ENCODE measurements at regions of chr7 and their contacts with region 1.

Region 1: DNA sequence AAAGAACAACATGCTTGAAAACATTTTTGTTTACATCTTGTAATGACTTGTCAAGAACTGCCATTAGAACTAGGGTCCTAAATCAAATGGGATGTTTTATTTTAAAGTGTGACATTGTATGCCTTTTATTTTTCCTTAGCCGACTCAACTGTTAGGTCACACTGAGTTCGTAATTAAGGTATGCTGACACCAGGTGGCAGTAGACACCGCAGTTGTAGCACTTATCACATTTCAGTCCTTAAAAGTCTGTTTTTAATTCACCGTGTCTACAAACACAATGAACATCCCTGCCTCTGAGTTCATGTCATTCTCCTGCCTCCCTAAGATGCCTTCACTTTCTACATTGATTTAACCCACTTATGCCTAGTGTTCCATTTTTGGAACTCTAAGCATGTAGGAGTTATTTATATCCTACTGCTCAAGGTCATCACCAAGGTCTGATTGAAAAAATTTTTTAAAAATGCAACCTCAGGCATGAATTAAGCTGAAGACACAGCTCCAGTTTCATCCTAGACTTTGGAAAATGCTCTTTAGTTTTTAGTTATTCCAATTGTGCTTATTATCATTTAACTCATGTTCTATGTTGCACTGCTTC is 186.1 kb downstream of the BMPER start:
- DNase-seq: peak in 1 of 2 experiments; percentile 14
- H3K4me3 ChIP-seq: no peak overlapping the region
- H3K4me3 Mint-ChIP-seq: no peak overlapping the region
- H3K27ac Mint-ChIP-seq: no peak overlapping the region
- H3K4me1 ChIP-seq: no peaks in the 10 kb centered on the region
- H3K4me1 Mint-ChIP-seq: no peaks in the 10 kb centered on the region
- H3K27me3 ChIP-seq: no peaks in the 10 kb centered on the region
- H3K27me3 Mint-ChIP-seq: peaks cover 2% of the 10 kb centered on the region
- CTCF ChIP-seq: peak in 1 of 2 experiments; percentile 53

Region 2: DNA sequence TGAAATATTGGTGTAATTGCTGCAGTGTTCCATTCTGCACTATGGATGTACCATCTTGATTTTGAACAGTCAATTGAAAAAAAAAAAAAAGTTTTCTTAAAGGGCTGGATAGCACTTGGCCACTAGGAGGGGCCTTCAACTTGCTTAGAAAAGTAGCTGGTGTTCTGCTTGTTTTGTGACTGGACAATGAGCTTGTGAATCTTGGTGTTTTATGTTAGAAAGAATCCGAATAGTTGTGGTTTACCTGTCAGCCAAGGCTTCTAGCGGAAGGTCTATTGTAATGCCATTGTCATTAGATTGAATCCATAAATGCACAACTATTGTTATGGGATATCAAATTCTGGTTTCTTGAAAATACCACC is 109.0 kb before region 1 on chr7:
- CTCF ChIA-PET with region 1: interaction called, 16 read pairs
- POLR2A ChIA-PET with region 1: no interaction called
- intact Hi-C with region 1: no loop called
- DNase-seq: no peak
- H3K4me3 ChIP-seq: no peak overlapping the region
- H3K4me3 Mint-ChIP-seq: no peak overlapping the region
- H3K27ac Mint-ChIP-seq: no peak overlapping the region
- H3K4me1 ChIP-seq: peaks cover 18% of the 10 kb centered on the region; the same call in 1 of the 2 replicates
- H3K4me1 Mint-ChIP-seq: peaks cover 12% of the 10 kb centered on the region
- H3K27me3 ChIP-seq: no peaks in the 10 kb centered on the region
- H3K27me3 Mint-ChIP-seq: no peaks in the 10 kb centered on the region
- CTCF ChIP-seq: peak in 1 of 2 experiments; percentile 22

Region 3: DNA sequence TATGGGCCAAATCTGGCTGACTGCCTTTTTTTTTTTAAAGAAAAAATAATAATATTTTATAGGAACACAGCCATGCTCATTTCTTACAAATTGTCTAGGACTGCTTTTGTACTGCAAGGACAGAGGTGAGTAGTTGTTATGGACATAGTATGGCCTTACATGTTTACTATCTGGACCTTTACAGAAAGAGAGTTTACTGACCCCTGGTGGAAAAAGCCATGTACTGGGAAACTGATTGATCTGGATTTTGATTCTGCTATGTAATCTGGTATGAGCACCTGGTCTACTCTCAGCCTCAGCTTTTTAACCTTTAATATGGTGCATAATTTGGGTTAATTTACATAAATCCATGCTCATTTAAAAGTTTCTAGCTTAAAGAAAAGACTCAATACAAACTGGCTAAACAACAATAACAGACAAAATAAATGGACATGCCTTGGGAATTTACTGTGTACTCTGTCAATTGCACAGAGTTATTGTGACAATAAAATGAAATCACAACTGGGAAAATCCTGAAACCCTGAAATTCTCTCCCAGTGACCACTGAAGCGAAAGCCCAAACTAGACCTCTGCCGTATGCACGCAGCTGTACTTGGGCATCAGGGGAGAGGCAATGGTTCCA is 74.6 kb after region 1 on chr7:
- CTCF ChIA-PET with region 1: no interaction called
- POLR2A ChIA-PET with region 1: no interaction called
- intact Hi-C with region 1: loop called (anchors 1 kb)
- DNase-seq: peak in 1 of 2 experiments; percentile 31
- H3K4me3 ChIP-seq: no peak overlapping the region
- H3K4me3 Mint-ChIP-seq: no peak overlapping the region
- H3K27ac Mint-ChIP-seq: no peak overlapping the region
- H3K4me1 ChIP-seq: no peaks in the 10 kb centered on the region
- H3K4me1 Mint-ChIP-seq: no peaks in the 10 kb centered on the region
- H3K27me3 ChIP-seq: no peaks in the 10 kb centered on the region; the same call in 1 of the 2 replicates
- H3K27me3 Mint-ChIP-seq: no peaks in the 10 kb centered on the region
- CTCF ChIP-seq: peak; percentile 25 to 34

Region 4: DNA sequence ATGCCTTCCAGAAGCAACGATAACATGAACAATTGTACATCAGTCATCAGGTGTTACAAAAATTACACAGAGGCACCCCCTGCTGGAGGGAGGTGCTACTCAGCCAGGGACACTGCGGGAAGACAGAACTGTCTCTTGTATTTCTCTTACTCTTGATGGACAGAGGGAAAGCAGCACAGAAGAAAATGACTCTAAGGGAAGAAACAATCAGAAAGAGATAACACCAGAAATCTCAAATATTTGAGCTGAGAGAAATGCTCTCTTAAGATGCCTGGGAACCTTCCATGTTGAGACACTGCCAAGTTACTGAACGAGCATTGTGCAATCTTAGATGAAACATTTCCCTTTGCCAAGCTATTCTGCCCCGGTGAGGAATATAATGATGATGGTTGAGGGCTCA is 339.0 kb after region 1 on chr7:
- CTCF ChIA-PET with region 1: no interaction called
- POLR2A ChIA-PET with region 1: no interaction called
- intact Hi-C with region 1: loop called (anchors 2 kb)
- DNase-seq: peak; percentile 40 to 48
- H3K4me3 ChIP-seq: no peak overlapping the region
- H3K4me3 Mint-ChIP-seq: no peak overlapping the region
- H3K27ac Mint-ChIP-seq: no peak overlapping the region
- H3K4me1 ChIP-seq: no peaks in the 10 kb centered on the region
- H3K4me1 Mint-ChIP-seq: no peaks in the 10 kb centered on the region
- H3K27me3 ChIP-seq: no peaks in the 10 kb centered on the region
- H3K27me3 Mint-ChIP-seq: peaks cover 5% of the 10 kb centered on the region
- CTCF ChIP-seq: peak; percentile 37 to 43